ENCODE measurements at regions of chr17 and their contacts with region 1.

Region 1: DNA sequence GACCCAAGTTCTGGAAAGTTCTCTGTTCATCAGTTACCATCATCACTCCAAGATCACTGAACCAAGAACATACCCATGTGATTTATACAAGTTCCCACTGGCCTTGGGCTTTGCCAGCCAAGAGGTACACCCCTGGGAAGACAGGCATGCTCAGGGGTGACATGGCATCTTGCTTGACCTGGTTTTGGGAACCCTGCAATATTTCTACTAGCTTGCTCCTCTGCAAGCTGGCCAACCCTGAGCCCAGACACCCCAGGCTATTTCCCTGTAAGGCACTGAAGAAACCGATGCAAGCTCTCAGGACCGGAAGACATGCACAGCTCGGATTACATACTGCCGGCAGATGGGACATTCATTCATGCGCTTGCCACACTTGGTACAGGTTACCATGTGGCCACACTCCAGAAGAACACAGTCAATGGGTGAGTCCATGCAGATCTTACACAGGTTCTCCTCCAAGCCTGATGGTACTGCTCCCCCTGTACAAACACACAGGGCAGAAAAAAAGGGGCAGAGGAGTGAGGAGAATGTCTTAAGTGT is 31.4 kb downstream of the LIG3 start:
- DNase-seq: no peak
- H3K4me3 ChIP-seq: no peak overlapping the region
- H3K27ac ChIP-seq: no peak overlapping the region
- H3K4me1 ChIP-seq: peaks cover 0 to 8% (median 3%) of the 10 kb centered on the region in 4 experiments; a peak in 3 of 7 replicates
- H3K27me3 ChIP-seq: no peaks in the 10 kb centered on the region
- CTCF ChIP-seq: no peak
- EP300 ChIP-seq: no peak
- POLR2A ChIP-seq: no peak
- RAD21 ChIP-seq: no peak

Region 2: GRCh38 chr17:34998205-34998604 is 13.5 kb before region 1 on chr17:
- CTCF ChIA-PET with region 1: interaction called, 11 read pairs
- POLR2A ChIA-PET with region 1: interaction called, 16 read pairs
- DNase-seq: peak; percentile 31 to 83
- H3K4me3 ChIP-seq: no peak overlapping the region
- H3K27ac ChIP-seq: no peak overlapping the region
- H3K4me1 ChIP-seq: no peaks in the 10 kb centered on the region
- H3K27me3 ChIP-seq: no peaks in the 10 kb centered on the region
- CTCF ChIP-seq: peak; percentile 87 to 93 (median 88)
- EP300 ChIP-seq: no peak
- POLR2A ChIP-seq: no peak
- RAD21 ChIP-seq: peak; percentile 95

Region 3: DNA sequence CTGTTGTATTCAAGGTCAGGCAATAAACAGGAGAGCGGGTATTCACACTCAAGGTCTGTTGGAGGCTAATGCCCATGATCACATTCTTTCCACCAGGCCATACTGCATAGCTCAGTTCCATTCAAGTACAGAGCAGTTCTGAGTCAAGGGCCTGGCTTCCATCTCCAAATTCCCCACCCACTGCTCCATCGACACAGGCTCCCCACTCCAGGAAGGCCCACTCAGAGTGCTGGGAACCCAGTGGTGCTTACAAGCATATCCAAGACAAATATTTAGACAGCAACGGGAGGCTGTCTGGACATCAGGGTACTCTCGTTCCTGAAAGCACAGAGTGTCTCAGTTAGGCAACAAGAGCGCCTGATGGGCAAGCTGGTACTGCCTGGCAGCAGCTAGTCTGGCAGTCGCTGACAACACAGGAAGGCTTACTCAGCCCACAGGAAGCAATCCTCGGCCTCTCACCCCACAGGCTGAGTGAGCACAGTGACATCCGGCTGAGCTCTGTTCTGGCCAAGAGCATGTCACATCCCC is 10.9 kb after region 1 on chr17:
- CTCF ChIA-PET with region 1: interaction called, 5 read pairs
- POLR2A ChIA-PET with region 1: interaction called, 24 read pairs
- DNase-seq: no peak
- H3K4me3 ChIP-seq: no peak overlapping the region
- H3K27ac ChIP-seq: no peak overlapping the region; the same call in 1 of the 2 replicates
- H3K4me1 ChIP-seq: no peaks in the 10 kb centered on the region
- H3K27me3 ChIP-seq: no peaks in the 10 kb centered on the region
- CTCF ChIP-seq: no peak
- EP300 ChIP-seq: no peak
- POLR2A ChIP-seq: no peak
- RAD21 ChIP-seq: no peak

Measured in H1 (cell line).